ENCODE measurements at regions of chr13 and their contacts with region 1.

Region 1: GRCh38 chr13:95624020-95624419 is 20.5 kb downstream of the DZIP1 start:
- DNase-seq: peak; percentile 39
- H3K4me3 Mint-ChIP-seq: no peak overlapping the region
- H3K27ac Mint-ChIP-seq: no peak overlapping the region
- H3K4me1 Mint-ChIP-seq: no peaks in the 10 kb centered on the region
- H3K27me3 Mint-ChIP-seq: peaks cover 14% of the 10 kb centered on the region

Region 2: GRCh38 chr13:95536632-95537241 is 87.3 kb before region 1 on chr13:
- CTCF ChIA-PET with region 1: interaction called, 18 read pairs
- intact Hi-C with region 1: loop called (anchors 1 kb)
- DNase-seq: no peak
- H3K4me3 Mint-ChIP-seq: no peak overlapping the region
- H3K27ac Mint-ChIP-seq: no peak overlapping the region
- H3K4me1 Mint-ChIP-seq: peaks cover 5% of the 10 kb centered on the region
- H3K27me3 Mint-ChIP-seq: peaks cover 26% of the 10 kb centered on the region

Region 3: GRCh38 chr13:95660981-95661581 is 37.1 kb after region 1 on chr13:
- CTCF ChIA-PET with region 1: interaction called, 28 read pairs
- intact Hi-C with region 1: loop called (anchors 1 kb)
- DNase-seq: peak; percentile 36
- H3K4me3 Mint-ChIP-seq: no peak overlapping the region
- H3K27ac Mint-ChIP-seq: no peak overlapping the region
- H3K4me1 Mint-ChIP-seq: no peaks in the 10 kb centered on the region
- H3K27me3 Mint-ChIP-seq: peaks cover 12% of the 10 kb centered on the region

Region 4: GRCh38 chr13:95982144-95982543 is 358.1 kb after region 1 on chr13:
- CTCF ChIA-PET with region 1: interaction called, 4 read pairs
- intact Hi-C with region 1: loop called (anchors 1 kb)
- DNase-seq: no peak
- H3K4me3 Mint-ChIP-seq: no peak overlapping the region
- H3K27ac Mint-ChIP-seq: no peak overlapping the region
- H3K4me1 Mint-ChIP-seq: no peaks in the 10 kb centered on the region
- H3K27me3 Mint-ChIP-seq: peaks cover 4% of the 10 kb centered on the region

Region 5: GRCh38 chr13:96229356-96229755 is 605.3 kb after region 1 on chr13:
- CTCF ChIA-PET with region 1: no interaction called
- intact Hi-C with region 1: loop called (anchors 5 kb)
- DNase-seq: no peak
- H3K4me3 Mint-ChIP-seq: no peak overlapping the region
- H3K27ac Mint-ChIP-seq: no peak overlapping the region
- H3K4me1 Mint-ChIP-seq: no peaks in the 10 kb centered on the region
- H3K27me3 Mint-ChIP-seq: no peaks in the 10 kb centered on the region